Psoas muscle (tissue), 8 donors: ENCODE measurements at regions of chr3 and their contacts with region 1.

Region 1: GRCh38 chr3:25789596-25790556 is at the start of gene OXSM:
- DNase-seq: peak; percentile 92 to 94
- ATAC-seq: peak; percentile 99
- H3K4me3 ChIP-seq: peak within 1 kb of the TSS; percentile 81
- H3K27ac ChIP-seq: peak within 1 kb of the TSS; percentile 96
- H3K4me1 ChIP-seq: peaks cover 24% of the 10 kb centered on the region
- H3K27me3 ChIP-seq: no peaks in the 10 kb centered on the region
- CTCF ChIP-seq: no peak
- total RNA-seq, gene OXSM: 11.1 to 13.3 (median 11.6) TPM

Region 2: GRCh38 chr3:25433868-25434267 is 356.0 kb before region 1 on chr3:
- intact Hi-C with region 1: loop called in 1 of 2 experiments (anchors 10 kb)
- DNase-seq: no peak
- ATAC-seq: peak in 3 of 4 donors; percentile 16 to 33 (median 31)
- H3K4me3 ChIP-seq: no peak overlapping the region
- H3K27ac ChIP-seq: no peak overlapping the region
- H3K4me1 ChIP-seq: peaks cover 16% of the 10 kb centered on the region
- H3K27me3 ChIP-seq: no peaks in the 10 kb centered on the region
- CTCF ChIP-seq: no peak